ENCODE measurements at regions of chr9 and their contacts with region 1.

Region 1: GRCh38 chr9:76761448-76761847 is 2.8 kb upstream of the PCA3 start:
- DNase-seq: peak in 2 of 4 experiments; percentile 7 to 11
- ATAC-seq: no peak
- H3K4me3 ChIP-seq: no peak overlapping the region
- H3K27ac ChIP-seq: no peak overlapping the region
- H3K4me1 ChIP-seq: no peaks in the 10 kb centered on the region
- H3K27me3 ChIP-seq: no peaks in the 10 kb centered on the region
- CTCF ChIP-seq: peak in 1 of 3 experiments; percentile 31; a peak in 2 of 6 replicates
- EP300 ChIP-seq: no peak
- POLR2A ChIP-seq: no peak
- RAD21 ChIP-seq: no peak; a peak in 1 of 4 replicates

Region 2: DNA sequence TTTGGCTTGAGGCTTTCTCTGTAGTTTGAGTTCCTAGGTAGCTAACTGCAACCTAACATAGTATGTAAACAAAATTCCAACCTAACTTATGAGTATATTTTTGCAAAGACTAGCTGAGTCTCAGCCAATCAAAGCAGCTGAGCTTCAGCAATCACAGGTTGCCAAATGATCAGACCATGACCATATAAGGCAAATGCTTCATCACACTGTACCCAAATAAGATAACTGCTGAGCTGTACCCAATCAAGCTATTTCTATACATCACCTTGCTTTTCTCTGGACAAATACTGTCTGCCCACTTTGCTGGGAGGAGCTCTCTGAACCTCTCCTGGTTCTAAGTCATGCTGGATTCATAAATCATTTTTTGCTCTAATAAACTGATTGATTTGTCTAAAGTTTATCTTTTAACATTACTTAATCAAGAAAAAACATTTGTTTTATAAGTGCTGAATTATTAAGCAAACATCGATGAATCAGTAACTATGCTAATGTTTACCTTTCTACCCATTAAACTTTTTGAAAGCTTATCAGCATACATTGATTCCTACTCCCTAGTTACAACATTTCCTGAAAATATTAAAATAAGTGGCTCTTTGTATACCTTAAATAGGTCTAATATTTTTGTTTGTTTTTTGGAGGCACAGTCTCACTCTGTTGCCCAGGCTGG is 127.0 kb before region 1 on chr9:
- CTCF ChIA-PET with region 1: no interaction called
- POLR2A ChIA-PET with region 1: no interaction called
- in situ Hi-C with region 1: no loop called
- intact Hi-C with region 1: no loop called
- DNase-seq: peak in 2 of 4 experiments; percentile 8 to 14
- ATAC-seq: peak; percentile 69; the same call in 2 of the 3 replicates
- H3K4me3 ChIP-seq: no peak overlapping the region
- H3K27ac ChIP-seq: no peak overlapping the region
- H3K4me1 ChIP-seq: peaks cover 0 to 8% of the 10 kb centered on the region in 2 experiments; a peak in 3 of 5 replicates
- H3K27me3 ChIP-seq: no peaks in the 10 kb centered on the region
- CTCF ChIP-seq: no peak
- EP300 ChIP-seq: no peak
- POLR2A ChIP-seq: no peak
- RAD21 ChIP-seq: no peak

Region 3: DNA sequence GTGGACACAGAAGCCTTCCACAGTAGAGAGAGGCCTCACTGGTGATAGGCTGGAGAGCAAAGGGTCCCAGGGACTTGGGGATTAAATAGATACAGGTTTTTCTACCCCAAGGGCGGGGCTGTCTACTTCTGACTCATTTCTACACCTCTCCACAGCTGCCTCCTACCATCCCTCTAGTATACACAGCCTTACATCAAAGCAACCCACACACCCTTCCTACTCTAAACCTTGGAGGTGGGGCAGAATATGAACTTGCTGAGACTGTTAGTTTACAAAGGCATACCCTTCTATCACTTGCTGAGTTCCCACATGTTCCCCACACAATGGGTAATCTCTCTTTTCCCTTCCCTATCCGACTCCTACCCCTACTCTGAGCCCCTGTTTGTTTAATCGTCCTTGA is 17.1 kb before region 1 on chr9:
- CTCF ChIA-PET with region 1: no interaction called
- POLR2A ChIA-PET with region 1: no interaction called
- in situ Hi-C with region 1: no loop called
- intact Hi-C with region 1: no loop called
- DNase-seq: no peak
- ATAC-seq: no peak
- H3K4me3 ChIP-seq: no peak overlapping the region
- H3K27ac ChIP-seq: no peak overlapping the region
- H3K4me1 ChIP-seq: no peaks in the 10 kb centered on the region
- H3K27me3 ChIP-seq: no peaks in the 10 kb centered on the region; a peak in 1 of 5 replicates
- CTCF ChIP-seq: no peak
- EP300 ChIP-seq: no peak
- POLR2A ChIP-seq: no peak
- RAD21 ChIP-seq: no peak

Region 4: DNA sequence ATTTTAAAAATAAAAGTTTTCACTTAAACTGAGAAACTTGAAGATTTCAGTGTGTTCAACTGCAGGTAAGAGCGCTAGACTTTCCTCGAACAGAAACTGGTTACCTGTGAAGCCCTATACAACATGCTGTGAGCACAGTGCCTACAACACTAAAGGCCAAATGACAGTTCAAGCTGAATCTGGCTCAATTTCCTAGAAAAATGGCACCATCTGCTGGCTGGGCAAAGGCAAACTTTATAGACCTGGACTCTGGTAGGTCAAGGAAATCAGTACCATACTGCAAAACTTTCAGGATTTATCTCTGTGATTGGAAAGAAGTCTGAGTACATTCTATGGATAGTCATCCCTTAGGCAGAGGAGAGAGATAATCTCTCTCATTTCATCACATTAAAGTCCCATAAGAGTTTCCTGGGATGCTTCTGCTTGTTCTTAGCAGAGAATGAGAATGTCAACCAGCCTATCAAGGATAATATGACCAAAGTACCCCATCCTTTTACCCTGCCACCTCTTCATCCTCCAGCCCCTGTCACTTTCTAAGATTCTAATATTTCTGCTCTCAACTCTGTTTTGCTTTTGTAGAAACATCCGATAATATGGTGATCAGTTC is 226.2 kb after region 1 on chr9:
- CTCF ChIA-PET with region 1: interaction called, 3 read pairs
- POLR2A ChIA-PET with region 1: no interaction called
- in situ Hi-C with region 1: no loop called
- intact Hi-C with region 1: loop called (anchors 5 kb)
- DNase-seq: peak; percentile 10 to 24 (median 12)
- ATAC-seq: peak; percentile 67
- H3K4me3 ChIP-seq: no peak overlapping the region
- H3K27ac ChIP-seq: no peak overlapping the region
- H3K4me1 ChIP-seq: no peaks in the 10 kb centered on the region
- H3K27me3 ChIP-seq: no peaks in the 10 kb centered on the region; a peak in 1 of 5 replicates
- CTCF ChIP-seq: peak; percentile 42 to 57 (median 48)
- EP300 ChIP-seq: no peak
- POLR2A ChIP-seq: no peak
- RAD21 ChIP-seq: peak; percentile 42 to 67

Measured in K562 (cell line).